A549 (cell line): ENCODE measurements at regions of chr19 and their contacts with region 1.

Region 1: GRCh38 chr19:35545001-35545911 is at the start of gene TMEM147:
- DNase-seq: peak; percentile 95 to 100
- ATAC-seq: peak; percentile 88 to 95
- H3K4me3 ChIP-seq: peak within 1 kb of the TSS; percentile 86
- H3K27ac ChIP-seq: peak within 1 kb of the TSS; percentile 88 to 93
- H3K4me1 ChIP-seq: peaks cover 14% of the 10 kb centered on the region
- CTCF ChIP-seq: no peak
- EP300 ChIP-seq: no peak
- POLR2A ChIP-seq: peak; percentile 95
- RAD21 ChIP-seq: no peak
- polyA plus RNA-seq, gene TMEM147: 335 and 446 TPM in 2 replicates

Region 2: DNA sequence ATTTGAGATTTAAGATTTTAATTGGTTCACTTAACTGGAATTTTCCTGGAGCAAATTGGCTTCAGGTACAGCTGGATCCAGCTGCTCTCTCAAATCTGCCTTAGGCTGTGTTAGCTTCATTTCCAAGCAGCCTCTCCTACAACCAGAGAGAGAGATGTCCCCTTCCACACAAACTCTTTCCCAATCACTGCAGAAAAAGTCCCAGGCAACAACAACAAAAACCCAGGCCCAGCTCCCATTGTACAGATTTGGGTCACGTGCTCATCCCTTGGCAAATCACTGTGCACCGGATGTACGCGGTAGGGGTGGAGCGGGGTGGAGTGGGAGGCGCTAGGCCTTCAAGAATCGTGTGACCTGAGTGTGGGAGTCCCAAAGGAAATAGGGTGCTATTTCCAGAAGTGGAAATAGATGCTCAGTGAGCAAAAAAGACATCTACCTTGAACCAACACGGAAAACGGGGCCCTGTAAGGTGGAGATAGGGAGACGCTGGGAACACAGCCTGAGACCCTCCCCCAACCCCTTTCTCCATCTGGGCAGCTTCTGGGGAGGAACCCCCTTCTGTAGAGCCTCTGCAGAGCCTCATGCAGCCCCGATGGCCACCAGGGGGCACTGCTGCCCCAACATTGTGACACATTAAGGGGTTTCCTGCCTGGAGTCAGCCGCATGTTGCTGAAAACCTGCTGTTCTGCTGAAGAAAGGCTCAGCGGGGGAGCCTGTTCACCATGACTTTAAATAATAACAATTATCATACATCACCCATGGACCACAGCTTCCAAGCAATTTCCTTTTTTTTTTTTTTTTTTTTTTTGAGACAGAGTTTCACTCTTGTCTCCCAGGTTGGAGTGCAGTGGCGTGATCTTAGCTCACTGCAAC is 478.3 kb before region 1 on chr19:
- CTCF ChIA-PET with region 1: no interaction called
- POLR2A ChIA-PET with region 1: no interaction called
- DNase-seq: peak; percentile 90 to 93
- ATAC-seq: peak; percentile 83 to 95
- H3K4me3 ChIP-seq: no peak overlapping the region; the same call in 2 of the 3 replicates
- H3K27ac ChIP-seq: no peak overlapping the region
- H3K4me1 ChIP-seq: peaks cover 9% of the 10 kb centered on the region; the same call in 2 of the 3 replicates
- CTCF ChIP-seq: peak; percentile 93
- EP300 ChIP-seq: no peak
- POLR2A ChIP-seq: no peak
- RAD21 ChIP-seq: peak; percentile 90 to 94

Region 3: DNA sequence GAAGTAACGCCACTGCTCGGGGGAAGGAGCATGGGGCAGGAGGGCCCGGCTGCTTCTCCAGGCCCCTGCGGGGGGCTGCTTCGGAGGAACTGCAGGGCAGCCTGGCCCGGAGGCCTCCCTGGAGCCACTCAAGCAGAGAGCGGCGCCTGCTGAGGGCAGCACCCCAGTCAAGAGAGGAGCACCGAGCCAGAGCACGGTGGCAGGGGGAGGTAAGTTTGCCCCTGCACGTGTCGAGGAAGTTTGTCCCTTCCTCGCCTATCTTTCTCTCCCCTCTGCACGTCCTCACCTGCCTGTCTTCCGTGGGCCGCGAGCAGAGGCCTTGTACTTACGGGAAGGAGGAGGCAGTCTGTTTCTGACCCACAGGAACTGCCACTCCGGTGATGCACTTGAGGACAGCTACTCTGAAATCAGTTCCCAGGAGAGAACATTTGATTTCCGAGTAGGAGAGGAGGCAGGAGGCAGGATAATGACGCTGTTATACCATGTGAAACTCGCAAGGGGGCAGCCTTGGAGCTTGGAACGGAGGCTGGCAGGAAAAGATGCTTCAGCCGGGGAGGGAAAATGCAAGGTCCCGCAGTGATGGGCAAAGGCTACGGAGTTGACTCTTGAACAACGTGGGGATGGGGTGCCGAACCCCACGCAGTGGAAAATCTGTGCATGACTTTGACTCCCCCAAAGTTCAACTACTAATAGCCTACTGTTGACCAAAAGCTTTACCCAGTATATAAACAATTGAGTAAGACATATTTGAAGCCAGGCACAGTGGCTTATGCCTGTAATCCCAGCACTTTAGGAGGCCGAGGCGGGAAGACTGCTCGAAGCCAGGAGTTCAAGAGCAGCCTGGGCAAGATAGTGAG is 192.6 kb before region 1 on chr19:
- CTCF ChIA-PET with region 1: interaction called, 12 read pairs
- POLR2A ChIA-PET with region 1: no interaction called
- DNase-seq: peak; percentile 87 to 98
- ATAC-seq: peak; percentile 77 to 88
- H3K4me3 ChIP-seq: no peak overlapping the region
- H3K27ac ChIP-seq: no peak overlapping the region
- H3K4me1 ChIP-seq: no peaks in the 10 kb centered on the region
- CTCF ChIP-seq: peak; percentile 98
- EP300 ChIP-seq: no peak
- POLR2A ChIP-seq: no peak
- RAD21 ChIP-seq: peak; percentile 98 to 99

Region 4: DNA sequence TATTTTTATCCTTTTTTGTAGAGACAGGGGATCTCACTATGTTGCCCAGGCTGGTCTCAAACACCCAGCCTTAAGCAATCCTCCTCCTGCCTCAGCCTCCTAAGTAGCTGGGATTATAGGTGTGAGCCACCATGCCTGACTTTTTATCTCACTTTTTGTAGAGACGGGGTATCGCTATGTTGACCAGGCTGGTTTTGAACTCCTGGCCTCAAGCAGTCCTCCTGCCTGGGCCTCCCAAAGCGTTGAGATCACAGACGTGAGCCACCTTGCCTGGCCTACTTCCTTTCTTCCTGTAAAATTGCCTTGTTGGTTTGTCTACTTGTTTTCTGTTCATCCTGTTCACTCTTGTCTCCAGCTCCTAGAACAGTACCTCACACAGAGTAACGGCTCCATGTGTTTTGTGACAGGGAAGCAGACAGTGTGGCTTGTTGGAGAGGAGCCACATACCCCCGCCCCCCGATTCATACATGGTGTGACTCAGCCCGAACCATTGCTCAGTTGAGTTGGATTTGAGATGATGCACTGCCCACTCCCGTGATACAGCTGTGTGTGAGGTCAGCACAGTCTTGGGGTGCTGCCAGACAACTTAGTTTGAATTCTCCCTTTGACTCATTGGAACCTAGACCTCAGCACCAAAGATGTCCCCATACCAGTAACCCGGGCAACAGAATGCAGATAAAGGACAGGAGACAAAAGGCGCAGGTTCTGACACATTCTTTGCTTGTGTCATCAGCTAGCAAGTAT is 140.2 kb before region 1 on chr19:
- CTCF ChIA-PET with region 1: no interaction called
- POLR2A ChIA-PET with region 1: no interaction called
- DNase-seq: peak; percentile 66
- ATAC-seq: peak; percentile 62 to 80
- H3K4me3 ChIP-seq: no peak overlapping the region
- H3K27ac ChIP-seq: no peak overlapping the region
- H3K4me1 ChIP-seq: no peaks in the 10 kb centered on the region
- CTCF ChIP-seq: no peak
- EP300 ChIP-seq: no peak
- POLR2A ChIP-seq: no peak
- RAD21 ChIP-seq: no peak

Region 5: GRCh38 chr19:35528218-35529038 is 16.8 kb before region 1 on chr19 and contains the start of gene SBSN:
- CTCF ChIA-PET with region 1: interaction called, 28 read pairs
- POLR2A ChIA-PET with region 1: interaction called, 3 read pairs
- DNase-seq: no peak
- ATAC-seq: no peak
- H3K4me3 ChIP-seq: no peak within 1 kb of the TSS
- H3K27ac ChIP-seq: no peak within 1 kb of the TSS
- H3K4me1 ChIP-seq: peaks cover 7% of the 10 kb centered on the region; the same call in 2 of the 3 replicates
- CTCF ChIP-seq: no peak
- EP300 ChIP-seq: no peak
- POLR2A ChIP-seq: no peak
- RAD21 ChIP-seq: no peak
- polyA plus RNA-seq, gene SBSN: 0.28 TPM in 2 replicates

Region 6: GRCh38 chr19:35578707-35579106 is 33.5 kb after region 1 on chr19:
- CTCF ChIA-PET with region 1: interaction called, 26 read pairs
- POLR2A ChIA-PET with region 1: interaction called, 3 read pairs
- DNase-seq: no peak
- ATAC-seq: no peak
- H3K4me3 ChIP-seq: no peak overlapping the region
- H3K27ac ChIP-seq: no peak overlapping the region
- H3K4me1 ChIP-seq: no peaks in the 10 kb centered on the region
- CTCF ChIP-seq: no peak
- EP300 ChIP-seq: no peak
- POLR2A ChIP-seq: no peak
- RAD21 ChIP-seq: no peak

Region 7: GRCh38 chr19:35618857-35619256 is 73.6 kb after region 1 on chr19:
- CTCF ChIA-PET with region 1: interaction called, 55 read pairs
- POLR2A ChIA-PET with region 1: no interaction called
- DNase-seq: peak in 1 of 2 experiments; percentile 71
- ATAC-seq: peak; percentile 59 to 81
- H3K4me3 ChIP-seq: no peak overlapping the region
- H3K27ac ChIP-seq: no peak overlapping the region
- H3K4me1 ChIP-seq: no peaks in the 10 kb centered on the region
- CTCF ChIP-seq: peak; percentile 29; the same call in 1 of the 3 replicates
- EP300 ChIP-seq: no peak
- POLR2A ChIP-seq: no peak
- RAD21 ChIP-seq: peak; percentile 22 to 45; a peak in 3 of 5 replicates

Region 8: GRCh38 chr19:35657904-35658700 is 112.8 kb after region 1 on chr19:
- CTCF ChIA-PET with region 1: interaction called, 21 read pairs
- POLR2A ChIA-PET with region 1: no interaction called
- DNase-seq: peak; percentile 50 to 68
- ATAC-seq: peak; percentile 91 to 94
- H3K4me3 ChIP-seq: no peak overlapping the region
- H3K27ac ChIP-seq: no peak overlapping the region
- H3K4me1 ChIP-seq: no peaks in the 10 kb centered on the region
- CTCF ChIP-seq: no peak
- EP300 ChIP-seq: no peak
- POLR2A ChIP-seq: no peak
- RAD21 ChIP-seq: peak in 1 of 2 experiments; percentile 17; a peak in 1 of 5 replicates

Region 9: DNA sequence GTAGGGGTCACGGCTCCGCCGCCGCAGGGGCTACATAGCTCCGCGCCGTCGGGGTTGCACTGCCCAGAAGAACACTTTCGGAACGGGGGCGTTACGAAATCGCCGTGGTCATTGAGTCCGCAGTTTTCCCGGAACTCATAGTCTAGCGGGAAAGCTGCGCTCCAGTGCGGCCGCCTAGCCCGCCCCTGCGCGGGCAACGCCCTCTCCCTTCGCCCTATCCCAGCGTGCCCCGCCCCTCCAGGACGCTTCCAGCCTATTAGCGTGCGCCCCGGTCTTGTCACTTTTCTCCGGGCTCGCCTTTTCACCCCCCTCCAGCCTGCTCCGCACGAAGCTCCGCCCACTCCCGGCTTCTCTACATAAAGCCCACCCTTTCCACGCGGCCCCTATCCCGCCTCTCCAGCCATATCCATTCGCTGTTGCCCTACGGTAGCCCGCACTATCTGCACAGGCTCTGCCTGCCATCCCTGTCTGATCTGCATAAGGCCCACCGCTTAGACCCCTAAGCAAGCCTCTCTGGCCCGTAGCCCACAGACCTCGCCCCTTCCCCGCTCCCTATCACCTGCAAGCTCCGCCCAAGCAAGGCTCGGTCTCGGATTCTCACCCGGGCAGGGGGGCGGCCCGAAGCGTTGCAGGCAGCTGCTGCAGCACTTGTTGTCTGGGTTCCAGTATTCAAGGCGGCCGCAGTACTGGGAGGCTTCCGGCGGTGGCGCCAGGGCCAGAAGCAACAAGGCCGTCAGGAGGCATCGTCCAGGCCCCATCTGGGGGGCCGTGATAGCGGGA is 195.4 kb after region 1 on chr19:
- CTCF ChIA-PET with region 1: interaction called, 12 read pairs
- POLR2A ChIA-PET with region 1: no interaction called
- DNase-seq: peak; percentile 97 to 100
- ATAC-seq: peak; percentile 58 to 86
- H3K4me3 ChIP-seq: peak overlapping the region; percentile 47
- H3K27ac ChIP-seq: peak overlapping the region; percentile 70 to 84
- H3K4me1 ChIP-seq: peaks cover 20% of the 10 kb centered on the region
- CTCF ChIP-seq: no peak
- EP300 ChIP-seq: no peak
- POLR2A ChIP-seq: peak; percentile 78
- RAD21 ChIP-seq: peak in 1 of 2 experiments; percentile 3; a peak in 1 of 5 replicates

Region 10: GRCh38 chr19:35889370-35890112 is 344.3 kb after region 1 on chr19:
- CTCF ChIA-PET with region 1: no interaction called
- POLR2A ChIA-PET with region 1: no interaction called
- DNase-seq: no peak
- ATAC-seq: peak; percentile 13 to 28; a peak in 5 of 6 replicates
- H3K4me3 ChIP-seq: no peak overlapping the region
- H3K27ac ChIP-seq: no peak overlapping the region
- H3K4me1 ChIP-seq: no peaks in the 10 kb centered on the region
- CTCF ChIP-seq: no peak
- EP300 ChIP-seq: no peak
- POLR2A ChIP-seq: no peak
- RAD21 ChIP-seq: no peak